ENCODE measurements at regions of chr13 and their contacts with region 1.

Region 1: GRCh38 chr13:32381539-32381938 is 46.4 kb downstream of the N4BP2L1 start:
- DNase-seq: no peak
- H3K4me3 ChIP-seq: no peak overlapping the region
- H3K27ac ChIP-seq: no peak overlapping the region
- H3K4me1 ChIP-seq: no peaks in the 10 kb centered on the region
- H3K27me3 ChIP-seq: no peaks in the 10 kb centered on the region
- CTCF ChIP-seq: peak in 3 of 4 experiments; percentile 12 to 35 (median 20)
- EP300 ChIP-seq: no peak
- POLR2A ChIP-seq: no peak

Region 2: DNA sequence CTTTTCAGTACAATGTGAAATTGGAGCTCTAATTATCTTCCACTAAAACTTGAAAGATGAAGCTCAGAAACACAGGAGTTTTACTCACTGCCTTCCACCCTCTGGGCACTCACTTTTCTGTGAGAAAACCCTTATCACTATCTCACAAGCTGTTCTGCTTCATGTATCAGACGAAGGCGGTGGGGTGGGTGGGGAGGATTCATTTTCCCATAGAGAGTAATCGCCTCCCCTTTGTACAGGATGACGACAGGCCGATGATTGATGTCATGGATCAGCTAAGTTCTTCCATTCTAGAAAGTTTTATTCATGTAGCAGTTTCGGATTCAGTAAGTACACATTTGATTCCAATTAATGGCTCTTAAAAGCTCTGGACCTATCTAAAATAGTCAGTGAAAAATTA is 206.2 kb before region 1 on chr13:
- intact Hi-C with region 1: no loop called
- DNase-seq: no peak
- H3K4me3 ChIP-seq: no peak overlapping the region
- H3K27ac ChIP-seq: no peak overlapping the region
- H3K4me1 ChIP-seq: no peaks in the 10 kb centered on the region
- H3K27me3 ChIP-seq: no peaks in the 10 kb centered on the region
- CTCF ChIP-seq: no peak
- EP300 ChIP-seq: no peak
- POLR2A ChIP-seq: no peak

Region 3: DNA sequence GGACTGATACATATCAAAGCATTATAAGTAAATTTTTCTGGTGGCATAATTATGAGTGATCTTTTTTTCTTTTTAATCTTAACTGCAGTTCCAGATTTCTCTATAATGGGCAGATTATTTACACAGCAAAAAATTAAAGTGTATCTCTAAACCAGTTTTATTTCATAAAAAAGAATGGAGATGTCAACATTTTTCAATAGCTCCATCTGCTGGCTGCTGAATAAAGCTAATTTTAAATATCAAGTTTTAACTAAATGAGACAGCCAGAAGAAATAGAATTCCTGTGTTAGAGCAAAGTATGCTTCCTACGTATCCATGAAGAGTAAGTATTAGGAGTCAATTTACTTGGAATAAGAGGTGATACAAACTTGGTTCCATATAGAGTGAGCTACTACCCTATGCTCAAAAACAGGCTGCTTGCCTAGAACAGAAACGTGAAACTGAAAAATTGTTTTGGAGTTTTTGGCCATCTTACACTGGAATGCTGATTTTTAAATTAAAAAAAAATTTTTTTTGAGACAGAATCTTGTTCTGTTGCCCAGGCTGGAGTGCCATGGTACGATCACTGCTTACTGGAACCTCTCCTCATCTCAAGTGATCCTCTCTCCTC is 199.7 kb after region 1 on chr13:
- intact Hi-C with region 1: loop called (anchors 5 kb)
- DNase-seq: no peak
- H3K4me3 ChIP-seq: no peak overlapping the region
- H3K27ac ChIP-seq: no peak overlapping the region
- H3K4me1 ChIP-seq: peaks cover 0 to 6% (median 5%) of the 10 kb centered on the region in 4 donors
- H3K27me3 ChIP-seq: no peaks in the 10 kb centered on the region
- CTCF ChIP-seq: peak in 3 of 4 experiments; percentile 5 to 59 (median 34)
- EP300 ChIP-seq: no peak
- POLR2A ChIP-seq: no peak